Activated B cell treated with CpG ODN at 0.5 μM for 24 hours (primary cell): ENCODE measurements at regions of chr6 and their contacts with region 1.

Region 1: GRCh38 chr6:163438940-163439335 is 24.4 kb downstream of the QKI start:
- DNase-seq: no peak
- ATAC-seq: no peak
- H3K4me3 Mint-ChIP-seq: no peak overlapping the region
- H3K27ac Mint-ChIP-seq: no peak overlapping the region
- H3K4me1 Mint-ChIP-seq: peaks cover 62% of the 10 kb centered on the region
- H3K27me3 Mint-ChIP-seq: no peaks in the 10 kb centered on the region
- CTCF ChIP-seq: no peak

Region 2: DNA sequence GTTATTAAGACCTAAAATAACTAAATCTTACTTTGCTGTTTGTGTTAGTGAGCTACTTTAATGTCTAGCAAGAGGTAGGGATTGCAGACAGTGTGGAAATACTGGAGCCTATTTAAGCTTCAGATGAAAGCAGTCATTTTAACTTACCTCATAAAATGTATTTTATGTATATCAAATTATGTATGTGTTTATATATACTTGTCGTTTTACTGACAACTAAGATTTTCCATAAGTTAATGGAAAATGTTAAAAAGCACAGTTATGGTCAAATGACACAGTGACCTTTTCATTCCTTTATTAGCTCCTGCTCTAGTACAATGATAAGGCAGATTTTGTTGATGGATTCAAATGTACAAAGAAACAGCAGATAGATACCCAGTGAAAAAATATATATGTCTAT is 10.1 kb after region 1 on chr6:
- CTCF ChIA-PET with region 1: no interaction called
- POLR2A ChIA-PET with region 1: no interaction called
- intact Hi-C with region 1: loop called (anchors 1 kb)
- DNase-seq: no peak
- ATAC-seq: no peak
- H3K4me3 Mint-ChIP-seq: no peak overlapping the region
- H3K27ac Mint-ChIP-seq: no peak overlapping the region
- H3K4me1 Mint-ChIP-seq: peaks cover 37% of the 10 kb centered on the region
- H3K27me3 Mint-ChIP-seq: no peaks in the 10 kb centered on the region
- CTCF ChIP-seq: no peak

Region 3: GRCh38 chr6:163460307-163460782 is 21.4 kb after region 1 on chr6:
- CTCF ChIA-PET with region 1: no interaction called
- POLR2A ChIA-PET with region 1: no interaction called
- intact Hi-C with region 1: loop called (anchors 2 kb)
- DNase-seq: no peak
- ATAC-seq: peak; percentile 87
- H3K4me3 Mint-ChIP-seq: peak overlapping the region; percentile 89
- H3K27ac Mint-ChIP-seq: peak overlapping the region; percentile 89
- H3K4me1 Mint-ChIP-seq: peaks cover 58% of the 10 kb centered on the region
- H3K27me3 Mint-ChIP-seq: no peaks in the 10 kb centered on the region
- CTCF ChIP-seq: no peak

Region 4: GRCh38 chr6:163872335-163872734 is 433.4 kb after region 1 on chr6:
- CTCF ChIA-PET with region 1: no interaction called
- POLR2A ChIA-PET with region 1: no interaction called
- intact Hi-C with region 1: no loop called
- DNase-seq: no peak
- ATAC-seq: no peak
- H3K4me3 Mint-ChIP-seq: no peak overlapping the region
- H3K27ac Mint-ChIP-seq: no peak overlapping the region
- H3K4me1 Mint-ChIP-seq: peaks cover 4% of the 10 kb centered on the region
- H3K27me3 Mint-ChIP-seq: peaks cover 4% of the 10 kb centered on the region
- CTCF ChIP-seq: no peak